PC-3 (cell line): ENCODE measurements at regions of chr12 and their contacts with region 1.

Region 1: DNA sequence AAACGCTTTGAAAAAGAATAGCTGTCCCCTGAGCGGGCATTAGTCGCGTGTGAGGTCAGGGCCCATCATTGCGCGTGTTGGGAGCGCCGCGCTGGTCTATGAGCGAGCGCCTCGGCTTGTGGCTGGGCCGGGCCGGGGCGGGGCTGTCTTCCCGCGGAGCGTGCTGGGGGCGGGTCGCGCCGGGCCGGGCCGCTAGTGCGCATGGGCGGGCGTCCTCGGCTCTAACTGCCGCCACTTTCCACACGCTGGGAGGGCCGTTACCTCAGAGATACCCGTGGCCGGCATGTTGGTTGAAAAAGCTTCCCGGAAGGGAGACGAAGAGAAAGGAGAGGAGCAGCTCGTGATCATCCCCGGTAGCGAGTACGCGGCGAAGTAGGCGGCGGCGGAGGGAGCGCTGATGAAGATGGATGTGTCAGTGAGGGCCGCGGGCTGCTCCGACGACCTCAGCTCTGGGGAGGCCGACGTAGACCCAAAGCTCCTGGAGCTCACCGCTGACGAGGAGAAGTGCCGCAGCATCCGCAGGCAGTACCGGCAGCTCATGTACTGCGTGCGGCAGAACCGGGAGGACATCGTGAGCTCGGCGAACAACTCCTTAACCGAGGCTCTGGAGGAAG is at the start of gene EID3:
- DNase-seq: no peak
- ATAC-seq: no peak
- H3K4me3 ChIP-seq: no peak within 1 kb of the TSS
- H3K27ac ChIP-seq: peak within 1 kb of the TSS; percentile 27
- H3K4me1 ChIP-seq: peaks cover 28% of the 10 kb centered on the region
- H3K27me3 ChIP-seq: no peaks in the 10 kb centered on the region
- CTCF ChIP-seq: no peak
- total RNA-seq, gene EID3: 9.8 and 12.0 TPM in 2 replicates

Region 2: DNA sequence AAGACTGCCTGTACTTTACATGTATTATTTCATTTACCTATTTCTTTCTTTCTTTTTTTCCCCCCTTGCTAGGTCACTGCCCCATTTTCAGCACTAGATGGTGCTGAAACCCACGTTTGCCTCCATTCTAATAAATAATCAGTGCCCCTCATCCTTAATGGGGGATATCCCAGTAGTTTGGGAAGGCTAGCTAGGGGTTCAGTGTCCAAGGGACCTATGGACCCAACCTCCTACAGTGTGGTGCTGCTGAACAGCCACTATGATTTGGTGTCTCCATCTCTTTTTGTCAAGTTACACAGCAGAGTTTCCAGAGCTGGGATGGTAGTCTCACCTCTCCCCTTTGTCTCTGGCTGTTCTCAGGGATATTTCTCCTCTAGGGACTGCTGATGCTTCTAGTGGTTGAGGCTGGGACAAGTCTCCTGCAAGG is 245.9 kb before region 1 on chr12:
- CTCF ChIA-PET with region 1: no interaction called
- POLR2A ChIA-PET with region 1: no interaction called
- intact Hi-C with region 1: loop called (anchors 10 kb)
- DNase-seq: peak; percentile 55
- ATAC-seq: peak; percentile 63
- H3K4me3 ChIP-seq: no peak overlapping the region
- H3K27ac ChIP-seq: no peak overlapping the region
- H3K4me1 ChIP-seq: peaks cover 6% of the 10 kb centered on the region
- H3K27me3 ChIP-seq: no peaks in the 10 kb centered on the region
- CTCF ChIP-seq: peak; percentile 94

Region 3: DNA sequence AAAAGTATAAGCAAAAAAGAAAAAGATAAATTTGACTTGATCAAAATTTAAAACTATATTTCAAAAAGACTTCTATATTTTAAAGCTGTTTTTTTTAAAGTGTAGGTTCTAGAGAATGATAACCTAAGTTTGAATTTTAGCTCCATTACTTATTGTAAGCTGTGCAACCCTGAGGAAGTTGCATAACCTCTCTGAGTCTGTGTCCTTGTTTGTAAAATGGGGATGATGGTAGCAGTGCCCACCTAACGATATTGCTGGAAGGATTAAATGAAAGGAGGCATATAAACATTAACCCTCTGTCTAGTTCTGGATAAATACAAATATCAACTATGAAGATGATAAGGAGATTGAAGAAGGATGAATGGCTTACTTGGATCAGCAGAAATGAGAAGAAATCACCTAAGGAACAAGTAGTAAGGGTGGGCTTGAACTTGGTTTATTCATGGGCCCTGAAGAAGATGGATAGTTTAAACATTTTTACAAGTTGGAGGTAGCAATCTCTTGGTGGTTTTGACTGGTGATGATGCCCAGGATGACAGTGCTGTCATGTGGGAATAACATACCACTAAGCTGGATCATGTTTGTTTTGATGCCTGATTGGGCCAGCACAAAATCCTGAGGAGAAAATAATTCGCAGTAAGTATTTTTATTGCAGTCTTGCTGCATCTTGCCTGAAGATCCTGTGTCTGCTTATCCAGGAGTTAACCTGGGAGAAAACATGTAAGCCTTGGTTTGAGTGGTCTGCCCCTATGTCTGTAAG is 53.1 kb before region 1 on chr12:
- CTCF ChIA-PET with region 1: no interaction called
- POLR2A ChIA-PET with region 1: interaction called, 15 read pairs
- intact Hi-C with region 1: no loop called
- DNase-seq: no peak
- ATAC-seq: no peak
- H3K4me3 ChIP-seq: no peak overlapping the region
- H3K27ac ChIP-seq: no peak overlapping the region
- H3K4me1 ChIP-seq: peaks cover 4% of the 10 kb centered on the region
- H3K27me3 ChIP-seq: no peaks in the 10 kb centered on the region
- CTCF ChIP-seq: no peak

Region 4: DNA sequence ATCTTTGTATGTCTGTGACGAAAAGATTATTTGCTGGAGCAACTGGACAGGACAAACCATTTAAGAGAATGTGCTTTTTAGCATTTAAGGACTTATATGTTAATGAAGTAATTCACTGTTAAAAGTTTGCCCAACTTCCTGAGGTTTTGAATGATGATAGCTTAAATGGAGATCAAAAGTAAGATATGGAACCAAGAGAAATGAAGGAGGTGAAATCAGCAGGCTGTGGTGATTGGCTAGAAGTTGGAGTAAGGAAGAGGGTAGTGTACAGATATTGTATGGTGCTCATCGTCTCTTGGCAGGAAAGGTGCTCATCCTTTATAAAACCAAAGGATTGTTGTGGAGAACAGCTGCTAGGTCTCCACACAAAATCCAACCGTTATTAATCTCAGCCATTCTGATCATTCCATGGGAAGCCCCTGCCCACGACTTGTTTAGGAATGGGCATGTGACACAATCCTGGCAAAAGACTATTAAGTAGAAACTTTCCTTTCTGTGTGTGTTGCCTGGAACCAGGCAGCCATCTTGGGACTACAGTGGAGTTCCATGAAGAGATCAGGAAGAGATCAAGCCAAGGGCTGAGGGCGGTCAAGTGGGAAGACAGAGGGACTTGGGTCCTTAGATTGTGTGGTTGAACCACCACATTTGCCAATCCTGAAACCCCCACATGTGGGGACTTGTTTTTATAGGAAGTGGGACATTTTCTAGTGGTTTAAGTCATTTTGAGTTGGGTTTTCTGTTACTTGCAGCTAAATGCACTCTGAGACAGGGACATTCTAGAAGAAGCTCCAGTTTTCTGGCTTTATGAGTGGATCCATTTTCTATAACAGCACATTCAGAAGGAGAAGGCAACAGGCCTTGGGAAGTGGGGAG is 96.3 kb after region 1 on chr12:
- CTCF ChIA-PET with region 1: no interaction called
- POLR2A ChIA-PET with region 1: no interaction called
- intact Hi-C with region 1: no loop called
- DNase-seq: no peak
- ATAC-seq: no peak
- H3K4me3 ChIP-seq: no peak overlapping the region
- H3K27ac ChIP-seq: no peak overlapping the region
- H3K4me1 ChIP-seq: no peaks in the 10 kb centered on the region
- H3K27me3 ChIP-seq: no peaks in the 10 kb centered on the region
- CTCF ChIP-seq: no peak

Region 5: DNA sequence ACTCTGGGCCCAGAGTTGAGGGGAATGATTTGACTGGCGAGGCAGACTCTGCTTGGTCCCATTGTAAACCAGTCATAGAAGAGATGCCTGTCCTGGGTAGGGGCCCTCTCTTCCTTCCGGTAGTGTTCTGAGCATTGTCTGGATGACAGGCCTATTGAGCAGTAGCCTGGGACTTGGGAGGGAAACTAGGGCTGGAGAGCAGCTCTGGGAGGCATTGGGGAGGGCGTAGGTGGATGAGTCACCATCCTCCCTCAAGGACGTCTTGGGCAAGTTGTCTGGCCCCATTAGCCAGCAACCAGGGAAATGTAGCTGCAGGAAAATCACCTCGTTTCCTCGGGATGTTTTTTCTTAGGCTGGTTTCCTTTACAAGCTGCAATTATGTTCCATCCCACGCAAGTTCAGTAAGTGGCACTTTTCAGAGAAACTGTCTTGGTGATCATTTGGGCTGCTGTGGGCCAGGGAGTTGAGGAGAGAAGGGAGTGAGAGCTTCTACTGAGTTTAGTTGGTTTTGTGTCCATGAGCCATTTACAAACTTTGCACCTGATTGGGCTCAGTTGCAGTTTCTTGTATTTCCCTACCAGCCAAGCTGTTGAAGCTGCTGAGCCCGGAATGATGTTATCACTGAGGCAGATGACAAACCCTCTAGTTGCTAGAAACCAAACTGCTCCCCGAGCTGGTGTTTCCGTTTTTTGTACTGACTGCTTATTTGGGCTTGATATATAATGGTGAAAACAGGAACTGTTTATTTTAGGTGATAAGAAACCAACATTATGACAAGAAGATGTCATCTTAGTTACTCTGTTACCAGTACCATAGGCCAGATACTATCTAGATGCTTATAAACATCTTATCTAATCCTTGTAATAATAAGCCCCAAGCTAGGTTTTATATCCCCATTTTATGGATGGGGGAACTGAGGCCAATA is 300.7 kb after region 1 on chr12:
- CTCF ChIA-PET with region 1: no interaction called
- POLR2A ChIA-PET with region 1: no interaction called
- intact Hi-C with region 1: no loop called
- DNase-seq: peak; percentile 92
- ATAC-seq: peak; percentile 94
- H3K4me3 ChIP-seq: peak overlapping the region; percentile 48
- H3K27ac ChIP-seq: peak overlapping the region; percentile 92
- H3K4me1 ChIP-seq: peaks cover 39% of the 10 kb centered on the region
- H3K27me3 ChIP-seq: no peaks in the 10 kb centered on the region
- CTCF ChIP-seq: no peak